Activated CD4-positive, alpha-beta T cell treated with anti-CD3 and anti-CD28 coated beads for 36 hours (primary cell): ENCODE measurements at regions of chr19 and their contacts with region 1.

Region 1: DNA sequence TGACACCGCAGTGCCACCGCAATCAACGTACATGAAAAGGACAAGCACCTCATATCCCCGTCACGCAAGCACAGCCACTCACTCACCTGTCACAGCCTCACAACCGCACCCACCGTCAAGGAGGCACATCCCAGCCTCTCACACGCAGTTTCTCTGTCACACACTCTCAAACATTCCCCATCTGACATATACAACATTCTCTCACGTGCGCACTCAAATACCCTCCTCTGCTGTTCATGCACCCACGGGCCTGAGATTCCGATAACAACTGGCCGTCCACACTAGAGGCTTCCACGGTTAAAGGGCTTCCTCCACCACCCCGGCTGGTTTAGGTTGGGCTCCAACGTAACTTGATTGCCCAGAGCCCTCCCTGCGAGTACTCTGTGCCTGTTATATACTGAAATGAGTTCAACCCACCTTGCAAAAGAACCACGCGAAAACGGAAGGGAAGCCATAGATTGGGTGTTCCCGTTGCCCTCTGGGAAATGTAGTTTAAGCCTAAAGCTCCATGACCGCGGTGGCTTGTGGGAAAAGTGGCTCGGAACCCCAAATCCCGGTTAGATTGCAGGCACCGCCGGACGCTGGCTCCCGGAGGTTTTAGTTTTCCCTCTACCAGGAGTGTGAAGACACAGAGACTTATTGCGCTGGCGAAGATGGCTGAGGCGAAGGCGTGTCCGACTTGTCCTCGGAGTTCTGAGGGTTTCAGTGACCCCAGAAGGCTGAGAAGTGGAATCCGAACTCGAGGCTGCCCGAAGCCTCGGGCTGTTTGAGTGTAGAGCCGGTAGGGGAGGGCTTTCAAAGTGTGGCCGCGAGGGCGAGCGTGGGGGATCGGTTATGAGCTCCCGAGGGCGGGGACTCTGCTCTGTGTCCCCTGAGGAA is at the start of gene ZNF573:
- DNase-seq: peak; percentile 90
- ATAC-seq: peak; percentile 94
- H3K4me3 Mint-ChIP-seq: peak within 1 kb of the TSS; percentile 95
- H3K27ac Mint-ChIP-seq: peak within 1 kb of the TSS; percentile 96
- H3K4me1 Mint-ChIP-seq: peaks cover 22% of the 10 kb centered on the region
- H3K27me3 Mint-ChIP-seq: no peaks in the 10 kb centered on the region
- total RNA-seq, gene ZNF573: 8.9 to 9.7 TPM

Region 2: GRCh38 chr19:36489118-36489919 is 1290.0 kb before region 1 on chr19 and contains the start of gene ZNF566:
- CTCF ChIA-PET with region 1: no interaction called
- POLR2A ChIA-PET with region 1: no interaction called
- intact Hi-C with region 1: loop called in 1 of 2 experiments (anchors 1 kb)
- DNase-seq: peak; percentile 97
- ATAC-seq: peak; percentile 93
- H3K4me3 Mint-ChIP-seq: peak within 1 kb of the TSS; percentile 86
- H3K27ac Mint-ChIP-seq: peak within 1 kb of the TSS; percentile 98
- H3K4me1 Mint-ChIP-seq: peaks cover 24% of the 10 kb centered on the region
- H3K27me3 Mint-ChIP-seq: no peaks in the 10 kb centered on the region
- total RNA-seq, gene ZNF566: 4.7 to 5.9 TPM

Region 3: DNA sequence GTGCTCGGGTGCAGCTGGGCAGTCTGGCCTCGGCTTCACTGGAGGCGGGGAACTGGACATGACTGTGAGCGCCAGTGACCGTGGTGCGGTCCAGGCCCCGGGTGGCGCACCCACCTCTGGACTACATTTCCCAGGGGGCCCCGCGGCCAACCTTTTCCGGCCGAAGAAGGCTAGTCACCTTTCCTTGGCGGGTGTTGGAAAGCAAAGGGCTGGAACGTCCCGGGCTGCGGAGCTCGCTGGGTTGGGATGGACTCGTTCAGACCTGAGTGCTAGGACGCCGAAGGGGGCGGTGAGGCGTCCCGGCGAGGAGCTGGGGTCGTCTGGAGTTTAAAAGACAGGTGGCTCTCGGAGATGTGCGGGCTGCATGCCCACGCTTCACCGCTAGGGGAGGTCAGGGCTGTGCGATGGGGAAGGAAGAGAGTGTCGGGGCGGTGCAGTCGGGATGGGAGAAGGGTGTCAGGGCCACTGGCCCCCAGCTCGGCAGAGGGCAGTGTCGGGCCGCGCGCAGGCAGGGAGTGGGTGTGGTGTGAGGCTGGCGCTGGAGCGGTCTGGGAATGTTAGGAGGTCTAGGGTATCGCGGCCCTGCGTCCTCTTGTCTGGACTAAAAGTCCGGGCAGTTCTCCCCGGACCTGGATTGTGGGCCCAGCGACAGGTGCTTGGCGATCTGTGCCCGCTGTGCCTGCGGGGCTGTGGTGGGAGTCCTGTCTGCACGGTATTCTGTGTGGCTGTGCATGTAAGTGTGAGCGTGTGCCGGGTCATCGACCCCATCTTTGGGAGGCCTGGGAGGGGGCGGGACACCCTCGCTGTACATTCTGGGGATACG is 806.1 kb before region 1 on chr19:
- CTCF ChIA-PET with region 1: no interaction called
- POLR2A ChIA-PET with region 1: no interaction called
- intact Hi-C with region 1: loop called in 1 of 2 experiments (anchors 1 kb)
- DNase-seq: peak; percentile 92
- ATAC-seq: peak; percentile 98
- H3K4me3 Mint-ChIP-seq: peak overlapping the region; percentile 81
- H3K27ac Mint-ChIP-seq: peak overlapping the region; percentile 92
- H3K4me1 Mint-ChIP-seq: peaks cover 6% of the 10 kb centered on the region
- H3K27me3 Mint-ChIP-seq: no peaks in the 10 kb centered on the region

Region 4: GRCh38 chr19:37309834-37310575 is 469.4 kb before region 1 on chr19:
- CTCF ChIA-PET with region 1: no interaction called
- POLR2A ChIA-PET with region 1: no interaction called
- intact Hi-C with region 1: loop called in 1 of 2 experiments (anchors 10 kb)
- DNase-seq: peak; percentile 56
- ATAC-seq: no peak
- H3K4me3 Mint-ChIP-seq: no peak overlapping the region
- H3K27ac Mint-ChIP-seq: no peak overlapping the region
- H3K4me1 Mint-ChIP-seq: peaks cover 17% of the 10 kb centered on the region
- H3K27me3 Mint-ChIP-seq: no peaks in the 10 kb centered on the region

Region 5: DNA sequence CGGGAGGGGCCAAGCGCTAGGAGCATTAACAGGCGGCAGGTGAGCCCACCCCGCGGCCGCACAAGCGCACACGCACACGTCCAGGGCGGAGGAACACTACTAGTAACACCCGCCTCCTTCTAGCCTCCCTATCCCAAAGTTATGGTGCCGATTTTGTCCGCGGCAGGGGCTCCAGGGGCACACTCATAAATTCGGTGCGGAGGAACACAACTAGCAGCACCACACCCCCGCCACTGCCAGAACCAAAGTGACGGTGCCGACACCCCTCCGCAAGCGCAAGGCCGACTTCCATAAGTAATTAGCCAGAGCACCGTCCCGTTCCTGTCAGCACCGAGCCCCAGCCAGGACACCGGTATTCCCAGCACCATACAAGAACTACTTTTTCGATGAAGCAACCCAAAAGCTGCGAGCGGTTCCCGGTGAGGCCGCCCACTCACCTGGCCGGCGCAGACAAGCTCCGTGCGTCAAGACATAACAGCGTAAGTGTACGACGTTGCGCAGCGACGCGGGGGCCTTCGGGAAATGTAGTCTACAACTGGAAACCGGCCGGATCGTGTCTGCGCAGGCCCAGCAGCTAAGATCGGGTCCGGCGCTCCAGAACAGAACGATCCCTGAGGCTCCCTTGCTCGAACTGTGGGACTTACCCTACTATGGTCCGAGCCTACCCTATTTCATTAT is 184.9 kb before region 1 on chr19 and contains the starts of genes ZNF540 and ZNF571:
- CTCF ChIA-PET with region 1: no interaction called
- POLR2A ChIA-PET with region 1: interaction called, 8 read pairs
- intact Hi-C with region 1: loop called (anchors 1 to 2 kb)
- DNase-seq: peak; percentile 97
- ATAC-seq: peak; percentile 97
- H3K4me3 Mint-ChIP-seq: peak within 1 kb of the TSS; percentile 94
- H3K27ac Mint-ChIP-seq: peak within 1 kb of the TSS; percentile 99
- H3K4me1 Mint-ChIP-seq: peaks cover 27% of the 10 kb centered on the region
- H3K27me3 Mint-ChIP-seq: no peaks in the 10 kb centered on the region
- total RNA-seq, gene ZNF540: 0.67 to 1.1 TPM
- total RNA-seq, gene ZNF571: 2.4 to 2.9 TPM

Region 6: DNA sequence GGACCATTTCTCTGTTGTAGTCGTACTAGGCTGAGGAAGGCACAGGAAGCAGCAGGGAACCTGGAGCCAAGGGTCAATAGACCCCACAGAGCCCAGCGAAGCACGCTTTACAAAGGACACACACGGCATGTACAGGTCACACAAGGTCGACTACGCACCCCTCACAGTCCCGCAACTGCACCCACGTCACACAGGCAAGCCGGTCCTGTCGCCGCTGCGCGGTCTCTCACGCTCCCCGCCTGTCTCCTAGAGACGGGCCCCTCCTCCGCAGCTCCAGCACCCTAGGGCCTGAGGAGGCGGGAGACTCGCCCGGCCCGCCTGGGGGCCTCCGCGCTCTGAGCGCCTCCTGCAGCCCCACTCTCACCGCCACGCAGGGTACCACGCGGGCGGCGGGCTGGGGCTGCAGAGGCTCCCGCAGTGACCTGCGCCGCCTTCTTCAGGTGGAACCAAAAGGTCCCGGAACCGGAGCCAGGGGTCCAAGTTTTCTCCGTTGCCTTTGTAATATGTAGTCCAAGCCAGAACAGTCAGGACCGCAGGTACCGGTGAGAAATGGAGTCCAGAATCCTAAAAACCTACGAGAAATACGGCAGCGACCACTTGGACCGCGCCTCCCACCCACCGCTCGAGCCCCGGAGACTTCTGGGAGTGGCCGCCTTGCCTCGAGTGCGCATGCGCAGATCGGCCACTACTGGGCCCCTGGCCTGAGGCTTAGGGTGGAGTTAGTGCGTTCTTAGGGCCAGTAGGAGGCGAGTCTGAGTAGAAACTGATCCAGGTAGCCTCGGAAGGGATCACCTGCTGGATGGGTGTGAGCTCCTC is 60.0 kb before region 1 on chr19 and contains the start of gene ZNF607:
- CTCF ChIA-PET with region 1: no interaction called
- POLR2A ChIA-PET with region 1: no interaction called
- intact Hi-C with region 1: loop called (anchors 1 to 2 kb)
- DNase-seq: peak; percentile 94
- ATAC-seq: peak; percentile 96
- H3K4me3 Mint-ChIP-seq: peak within 1 kb of the TSS; percentile 88
- H3K27ac Mint-ChIP-seq: peak within 1 kb of the TSS; percentile 89
- H3K4me1 Mint-ChIP-seq: peaks cover 19% of the 10 kb centered on the region
- H3K27me3 Mint-ChIP-seq: no peaks in the 10 kb centered on the region
- total RNA-seq, gene ZNF607: 4.9 to 8.3 TPM

Region 7: DNA sequence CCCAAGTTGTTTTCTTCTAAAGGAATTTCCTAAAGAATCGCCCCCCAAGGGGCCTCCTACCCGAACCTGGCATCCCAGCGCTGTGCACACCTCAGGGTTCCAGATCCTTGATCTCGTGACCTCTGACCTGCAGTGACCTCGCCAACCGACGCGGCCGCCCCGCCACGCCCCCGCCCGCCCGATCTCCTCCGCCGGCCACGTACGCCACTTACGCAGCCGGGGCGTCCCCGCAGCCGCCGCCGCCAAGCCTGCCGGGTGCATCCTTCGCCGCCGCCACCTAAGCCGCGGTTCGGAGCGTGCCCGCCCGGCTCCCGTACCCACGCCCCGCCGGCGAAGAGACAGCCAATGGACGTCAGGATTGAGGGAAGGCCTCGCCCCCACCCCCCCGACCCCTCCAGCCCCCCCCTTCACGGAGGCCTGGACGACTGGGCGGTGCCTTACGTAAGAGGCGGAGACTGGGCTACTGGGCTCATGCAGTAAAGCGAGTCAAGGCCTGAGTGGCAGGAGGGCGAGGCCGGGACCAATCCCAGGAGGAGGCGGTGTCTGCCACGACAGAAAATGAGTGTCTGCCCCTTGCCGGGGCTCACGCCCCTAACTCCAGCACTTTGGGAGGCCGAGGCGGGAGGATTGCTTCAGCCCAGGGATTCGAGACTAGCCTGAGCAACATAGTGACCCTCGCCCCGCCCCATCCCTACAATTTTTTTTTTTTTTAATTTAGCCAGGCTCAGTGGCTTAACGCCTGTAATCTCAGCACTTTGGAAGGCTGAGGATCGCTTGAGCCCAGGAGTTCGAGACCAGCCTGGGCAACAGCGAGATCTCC is 536.5 kb after region 1 on chr19 and contains the start of gene YIF1B:
- CTCF ChIA-PET with region 1: no interaction called
- POLR2A ChIA-PET with region 1: no interaction called
- intact Hi-C with region 1: loop called in 1 of 2 experiments (anchors 5 kb)
- DNase-seq: peak; percentile 97
- ATAC-seq: peak; percentile 95
- H3K4me3 Mint-ChIP-seq: peak within 1 kb of the TSS; percentile 94
- H3K27ac Mint-ChIP-seq: peak within 1 kb of the TSS; percentile 98
- H3K4me1 Mint-ChIP-seq: peaks cover 35% of the 10 kb centered on the region
- H3K27me3 Mint-ChIP-seq: no peaks in the 10 kb centered on the region
- total RNA-seq, gene YIF1B: 76.3 to 90.1 TPM